MCF 10A (cell line): ENCODE measurements at regions of chr11 and their contacts with region 1.

Region 1: GRCh38 chr11:133821776-133822175 is 23.5 kb downstream of the SPATA19 start:
- DNase-seq: peak; percentile 36
- H3K4me3 Mint-ChIP-seq: no peak overlapping the region
- H3K27ac Mint-ChIP-seq: no peak overlapping the region
- H3K4me1 Mint-ChIP-seq: peaks cover 6% of the 10 kb centered on the region
- H3K27me3 Mint-ChIP-seq: peaks cover 20% of the 10 kb centered on the region
- CTCF ChIP-seq: peak; percentile 63

Region 2: DNA sequence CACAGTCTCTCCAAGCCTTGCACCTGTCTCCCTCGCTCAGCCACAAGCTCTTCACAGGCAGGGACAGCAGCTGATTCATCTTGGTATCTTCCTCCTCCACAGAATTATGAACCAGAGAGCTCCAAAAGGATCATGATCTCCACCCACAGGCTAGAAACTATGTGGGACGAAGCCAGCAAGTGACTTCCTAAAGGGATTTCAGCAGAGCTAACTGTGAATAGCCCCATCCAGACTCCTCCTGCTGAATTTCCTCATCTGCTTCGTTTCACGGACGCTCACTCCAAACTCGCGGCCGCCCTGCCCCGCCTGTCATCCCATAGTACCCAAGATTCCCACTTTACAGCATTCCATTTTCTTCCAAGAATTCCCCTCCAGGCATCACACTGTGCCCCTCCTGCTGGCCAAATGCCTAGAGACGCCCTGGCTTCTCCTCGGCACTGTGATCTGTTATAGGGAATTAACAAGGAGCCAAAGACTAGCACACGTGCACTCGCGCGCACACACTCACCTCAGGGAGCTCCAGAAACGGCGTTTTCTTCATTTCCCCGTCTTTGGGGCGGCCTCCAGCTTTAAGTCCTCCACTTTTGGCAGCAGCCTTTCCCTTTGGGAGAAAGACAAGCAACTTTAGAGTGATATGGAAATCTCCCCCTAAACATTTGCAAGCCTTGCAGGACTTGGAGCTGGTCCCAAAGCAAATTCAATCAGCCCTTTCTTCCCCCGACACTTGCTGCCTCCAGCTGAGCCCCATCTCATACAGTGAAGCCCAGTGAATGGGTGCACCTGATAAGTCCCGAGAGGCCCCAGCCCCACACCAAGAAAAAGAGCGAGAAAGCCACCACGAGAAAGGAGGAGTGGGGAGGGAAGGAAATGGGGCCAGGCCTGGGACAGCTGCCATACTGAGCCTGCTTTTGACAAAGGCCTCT is 11.9 kb before region 1 on chr11:
- CTCF ChIA-PET with region 1: interaction called, 20 read pairs
- POLR2A ChIA-PET with region 1: no interaction called
- intact Hi-C with region 1: no loop called
- DNase-seq: no peak
- H3K4me3 Mint-ChIP-seq: no peak overlapping the region
- H3K27ac Mint-ChIP-seq: no peak overlapping the region
- H3K4me1 Mint-ChIP-seq: no peaks in the 10 kb centered on the region
- H3K27me3 Mint-ChIP-seq: peaks cover 1% of the 10 kb centered on the region
- CTCF ChIP-seq: no peak

Region 3: DNA sequence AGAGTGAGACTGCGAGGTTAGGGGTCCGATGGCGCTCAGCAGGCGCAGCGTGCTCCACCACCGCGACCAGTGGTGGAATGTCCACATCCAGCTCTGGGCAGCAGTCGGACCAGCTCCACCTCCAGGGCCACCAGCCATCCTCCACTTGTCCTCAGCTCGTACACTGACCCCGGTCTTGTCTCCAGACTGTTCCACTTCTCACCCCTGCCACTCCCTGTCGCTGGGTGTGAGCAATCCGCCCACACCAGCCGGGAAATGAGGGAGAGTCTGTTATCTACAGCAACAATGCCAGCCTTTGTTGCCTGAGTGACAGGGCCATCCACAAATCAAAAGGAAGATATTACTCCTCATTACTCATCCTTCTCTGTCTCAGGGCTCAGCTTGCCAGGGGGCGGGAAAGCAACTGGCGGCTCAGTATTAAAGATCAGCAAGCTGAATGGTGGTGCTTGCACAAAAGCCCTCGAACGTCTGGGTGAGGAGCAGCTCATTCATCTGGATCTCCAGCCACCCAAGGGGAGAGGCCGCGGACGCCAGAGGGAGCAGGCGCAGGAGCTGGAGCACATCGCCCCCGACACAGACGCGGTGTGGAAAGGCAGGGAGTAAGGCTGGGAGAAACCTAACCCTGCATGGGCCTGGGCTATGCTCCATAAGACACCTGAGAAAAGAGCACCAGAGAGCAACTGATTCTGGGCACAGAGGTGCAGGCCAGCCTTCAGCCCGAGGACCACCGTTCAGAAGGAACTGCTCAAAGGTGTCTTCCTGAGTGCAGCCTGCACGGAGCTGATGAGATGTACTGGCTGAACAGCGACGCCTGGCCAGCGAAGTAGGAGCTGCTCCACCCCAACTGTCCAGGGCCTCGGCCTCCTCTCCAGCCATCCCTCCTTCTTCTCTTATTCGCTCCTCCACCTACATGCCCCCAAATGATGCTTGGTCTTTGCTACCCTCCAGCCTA is 113.1 kb after region 1 on chr11:
- CTCF ChIA-PET with region 1: no interaction called
- POLR2A ChIA-PET with region 1: no interaction called
- intact Hi-C with region 1: no loop called
- DNase-seq: peak; percentile 91
- H3K4me3 Mint-ChIP-seq: no peak overlapping the region
- H3K27ac Mint-ChIP-seq: peak overlapping the region; percentile 50
- H3K4me1 Mint-ChIP-seq: peaks cover 12% of the 10 kb centered on the region
- H3K27me3 Mint-ChIP-seq: no peaks in the 10 kb centered on the region
- CTCF ChIP-seq: no peak

Region 4: GRCh38 chr11:135061166-135061565 is 1239.4 kb after region 1 on chr11:
- CTCF ChIA-PET with region 1: no interaction called
- POLR2A ChIA-PET with region 1: no interaction called
- intact Hi-C with region 1: no loop called
- DNase-seq: no peak
- H3K4me3 Mint-ChIP-seq: no peak overlapping the region
- H3K27ac Mint-ChIP-seq: no peak overlapping the region
- H3K4me1 Mint-ChIP-seq: no peaks in the 10 kb centered on the region
- H3K27me3 Mint-ChIP-seq: no peaks in the 10 kb centered on the region
- CTCF ChIP-seq: no peak